PC-9 (cell line): ENCODE measurements at regions of chr14 and their contacts with region 1.

Region 1: GRCh38 chr14:93195316-93195999 is 10.3 kb downstream of the LYSET start:
- DNase-seq: no peak
- H3K4me3 ChIP-seq: no peak overlapping the region
- H3K27ac ChIP-seq: no peak overlapping the region
- H3K4me1 ChIP-seq: no peaks in the 10 kb centered on the region
- H3K27me3 ChIP-seq: no peaks in the 10 kb centered on the region
- CTCF ChIP-seq: no peak

Region 2: GRCh38 chr14:93120517-93120916 is 74.9 kb before region 1 on chr14:
- CTCF ChIA-PET with region 1: interaction called, 11 read pairs
- POLR2A ChIA-PET with region 1: no interaction called
- intact Hi-C with region 1: no loop called
- DNase-seq: no peak
- H3K4me3 ChIP-seq: no peak overlapping the region
- H3K27ac ChIP-seq: no peak overlapping the region
- H3K4me1 ChIP-seq: peaks cover 8% of the 10 kb centered on the region; the same call in 1 of the 2 replicates
- H3K27me3 ChIP-seq: no peaks in the 10 kb centered on the region
- CTCF ChIP-seq: no peak

Region 3: DNA sequence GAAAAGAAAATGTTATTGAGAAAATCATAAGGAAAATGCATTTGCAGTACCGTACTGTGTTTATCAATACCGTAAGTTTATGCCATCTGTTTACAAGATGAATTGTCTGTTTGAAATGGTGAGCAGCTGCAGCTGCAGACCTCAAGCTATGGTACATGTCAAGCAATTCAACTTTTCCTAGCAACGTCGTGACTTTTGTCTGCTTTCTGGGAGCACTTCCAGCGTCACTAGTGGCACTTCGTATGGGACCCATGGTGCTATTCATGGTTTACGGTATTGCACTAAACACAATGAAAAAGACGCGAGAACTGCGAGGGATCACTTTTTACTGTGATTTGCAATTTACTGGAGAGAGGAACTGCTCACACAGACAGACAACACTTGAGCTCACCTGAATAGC is 396.0 kb after region 1 on chr14:
- CTCF ChIA-PET with region 1: no interaction called
- POLR2A ChIA-PET with region 1: no interaction called
- intact Hi-C with region 1: no loop called
- DNase-seq: no peak
- H3K4me3 ChIP-seq: no peak overlapping the region
- H3K27ac ChIP-seq: no peak overlapping the region
- H3K4me1 ChIP-seq: no peaks in the 10 kb centered on the region
- H3K27me3 ChIP-seq: peaks cover 74% of the 10 kb centered on the region
- CTCF ChIP-seq: no peak